ENCODE measurements at regions of chr22 and their contacts with region 1.

Region 1: GRCh38 chr22:20156611-20157429 is 6.0 kb upstream of the CCDC188 start:
- DNase-seq: peak; percentile 81
- H3K4me3 ChIP-seq: no peak overlapping the region
- H3K27ac ChIP-seq: no peak overlapping the region
- H3K4me1 ChIP-seq: no peaks in the 10 kb centered on the region
- H3K27me3 ChIP-seq: no peaks in the 10 kb centered on the region
- CTCF ChIP-seq: peak; percentile 97

Region 2: GRCh38 chr22:20268279-20269012 is 111.6 kb after region 1 on chr22 and contains the start of gene RTN4R:
- CTCF ChIA-PET with region 1: no interaction called
- POLR2A ChIA-PET with region 1: no interaction called
- intact Hi-C with region 1: loop called (anchors 1 kb)
- DNase-seq: peak; percentile 70
- H3K4me3 ChIP-seq: peak within 1 kb of the TSS; percentile 52
- H3K27ac ChIP-seq: peak within 1 kb of the TSS; percentile 37
- H3K4me1 ChIP-seq: peaks cover 8% of the 10 kb centered on the region
- H3K27me3 ChIP-seq: no peaks in the 10 kb centered on the region
- CTCF ChIP-seq: peak; percentile 41; the same call in 1 of the 2 replicates
- total RNA-seq, gene RTN4R: 9.6 and 9.9 TPM in 2 replicates

Region 3: GRCh38 chr22:20284471-20285086 is 127.8 kb after region 1 on chr22:
- CTCF ChIA-PET with region 1: interaction called, 7 read pairs
- POLR2A ChIA-PET with region 1: no interaction called
- intact Hi-C with region 1: loop called (anchors 1 kb)
- DNase-seq: no peak
- H3K4me3 ChIP-seq: no peak overlapping the region
- H3K27ac ChIP-seq: no peak overlapping the region
- H3K4me1 ChIP-seq: no peaks in the 10 kb centered on the region
- H3K27me3 ChIP-seq: no peaks in the 10 kb centered on the region
- CTCF ChIP-seq: no peak

Region 4: DNA sequence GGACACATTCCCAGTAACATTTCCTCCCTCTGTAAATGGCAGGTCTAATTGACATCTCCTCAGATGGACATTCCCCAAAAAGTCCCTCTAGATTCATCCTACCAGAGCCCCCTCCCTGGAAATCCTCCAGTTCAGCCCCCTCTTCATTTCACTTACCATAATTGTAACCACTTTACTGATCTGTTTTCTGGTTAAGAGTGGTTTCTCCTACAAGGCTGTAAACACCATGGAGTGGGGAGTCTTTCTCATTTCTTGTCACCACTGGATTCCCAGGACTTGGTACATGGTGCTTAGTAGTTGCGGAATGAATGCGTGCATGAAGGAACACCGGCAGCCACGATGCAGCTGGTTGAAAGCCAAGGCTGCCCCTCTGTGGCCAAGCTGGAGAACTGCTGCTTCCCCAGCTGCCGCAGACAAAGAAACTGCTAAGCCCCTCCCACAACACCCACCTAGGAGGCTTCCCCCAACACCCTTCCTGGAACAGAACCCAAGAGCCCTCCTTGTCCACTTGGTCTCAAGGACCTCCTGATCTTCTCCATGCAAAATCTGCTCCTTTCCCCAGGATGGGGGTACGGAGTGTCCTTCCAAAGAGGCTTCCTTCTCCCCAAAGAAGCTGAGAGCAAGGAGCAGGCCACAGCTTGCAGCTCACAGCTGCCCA is 299.4 kb after region 1 on chr22:
- CTCF ChIA-PET with region 1: interaction called, 4 read pairs
- POLR2A ChIA-PET with region 1: no interaction called
- intact Hi-C with region 1: loop called (anchors 1 kb)
- DNase-seq: peak; percentile 90
- H3K4me3 ChIP-seq: no peak overlapping the region
- H3K27ac ChIP-seq: no peak overlapping the region
- H3K4me1 ChIP-seq: no peaks in the 10 kb centered on the region
- H3K27me3 ChIP-seq: no peaks in the 10 kb centered on the region
- CTCF ChIP-seq: peak; percentile 96